Dendritic cell treated with granulocyte-macrophage colony-stimulating factor and Interleukin-4, amounts not matched to agents 40 ng/mL and 50 ng/mL, for 4 days (primary cell): ENCODE measurements at regions of chr21 and their contacts with region 1.

Region 1: DNA sequence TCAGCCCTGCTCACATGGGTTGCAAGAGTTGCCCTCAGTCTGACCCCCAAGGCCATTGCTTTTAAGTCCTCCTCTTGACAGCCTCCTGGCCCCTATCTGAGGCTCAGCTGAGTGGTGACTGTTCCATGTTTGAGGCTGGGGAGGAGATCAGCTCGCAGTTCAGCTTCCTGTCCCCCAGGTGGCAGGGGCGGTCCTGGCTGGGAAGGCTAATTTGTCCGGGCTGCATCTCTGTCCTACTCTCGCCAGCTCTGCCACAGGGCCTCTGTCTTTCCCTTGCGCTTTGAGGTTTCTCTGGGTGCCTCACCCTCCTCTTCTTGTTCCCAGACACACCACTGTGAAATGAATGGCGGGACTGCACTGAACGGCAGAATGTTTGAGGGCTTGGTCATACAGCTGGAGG is 157.3 kb downstream of the KCNJ6 start:
- H3K4me3 Mint-ChIP-seq: no peak overlapping the region
- H3K27ac Mint-ChIP-seq: no peak overlapping the region
- H3K4me1 Mint-ChIP-seq: no peaks in the 10 kb centered on the region
- H3K27me3 Mint-ChIP-seq: no peaks in the 10 kb centered on the region

Region 2: GRCh38 chr21:37916310-37917051 is 157.5 kb after region 1 on chr21 and contains the start of gene KCNJ6:
- intact Hi-C with region 1: loop called (anchors 2 kb)
- H3K4me3 Mint-ChIP-seq: no peak within 1 kb of the TSS
- H3K27ac Mint-ChIP-seq: no peak within 1 kb of the TSS
- H3K4me1 Mint-ChIP-seq: peaks cover 14% of the 10 kb centered on the region
- H3K27me3 Mint-ChIP-seq: peaks cover 72% of the 10 kb centered on the region

Region 3: GRCh38 chr21:38126669-38127303 is 367.8 kb after region 1 on chr21:
- intact Hi-C with region 1: loop called (anchors 2 kb)
- H3K4me3 Mint-ChIP-seq: no peak overlapping the region
- H3K27ac Mint-ChIP-seq: no peak overlapping the region
- H3K4me1 Mint-ChIP-seq: no peaks in the 10 kb centered on the region
- H3K27me3 Mint-ChIP-seq: peaks cover 23% of the 10 kb centered on the region